Heart right ventricle (tissue), 16 donors: ENCODE measurements at regions of chr17 and their contacts with region 1.

Region 1: GRCh38 chr17:64326395-64327054 is 63.5 kb upstream of the TEX2 start:
- DNase-seq: peak; percentile 78 to 84
- ATAC-seq: peak; percentile 65 to 93 (median 70)
- H3K4me3 ChIP-seq: peak overlapping the region in 1 of 10 donors; percentile 15
- H3K27ac ChIP-seq: peak overlapping the region; percentile 69 to 95 (median 87)
- H3K4me1 ChIP-seq: peaks cover 20 to 91% (median 71%) of the 10 kb centered on the region in 9 donors
- H3K27me3 ChIP-seq: no peaks in the 10 kb centered on the region
- CTCF ChIP-seq: no peak

Region 2: GRCh38 chr17:64357191-64357981 is 30.9 kb after region 1 on chr17:
- intact Hi-C with region 1: loop called in 3 of 10 experiments (anchors 2 to 5 kb)
- DNase-seq: peak; percentile 58 to 66
- ATAC-seq: peak; percentile 83 to 93 (median 90)
- H3K4me3 ChIP-seq: no peak overlapping the region
- H3K27ac ChIP-seq: peak overlapping the region; percentile 40 to 85 (median 77)
- H3K4me1 ChIP-seq: peaks cover 15 to 83% (median 67%) of the 10 kb centered on the region in 9 donors
- H3K27me3 ChIP-seq: no peaks in the 10 kb centered on the region
- CTCF ChIP-seq: no peak